ENCODE measurements at regions of chr3 and their contacts with region 1.

Region 1: DNA sequence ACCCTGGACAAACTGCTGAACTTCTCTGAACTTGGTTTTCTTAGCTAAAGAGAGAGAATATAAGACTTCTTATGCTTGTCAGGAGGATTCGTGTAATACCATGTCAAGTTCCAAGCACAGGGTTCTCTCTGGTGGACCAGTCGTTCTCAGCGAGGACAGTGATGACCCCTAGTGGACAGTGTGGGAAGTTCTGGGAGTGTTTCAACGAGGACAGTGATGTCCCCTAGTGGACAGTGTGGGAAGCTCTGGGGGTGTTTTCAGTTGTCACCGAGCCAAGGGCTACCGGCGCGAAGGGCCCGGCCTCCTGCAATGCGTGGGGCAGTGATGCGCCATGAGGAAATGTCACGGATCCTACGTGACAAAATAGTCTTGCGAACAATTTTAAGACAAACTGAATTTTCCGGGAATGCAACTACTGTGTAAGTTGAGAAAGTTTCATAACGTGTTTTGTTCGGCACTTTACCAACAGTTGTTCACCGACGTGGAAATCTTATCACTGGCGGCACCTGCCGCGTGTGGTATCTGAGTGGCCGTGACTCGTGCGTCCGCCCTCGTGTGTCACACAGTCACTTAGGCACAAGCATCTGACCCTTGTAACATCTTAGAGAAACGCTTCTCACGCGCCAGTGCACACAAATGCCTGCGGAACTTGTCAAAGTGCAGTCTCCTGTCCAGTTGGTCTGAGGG is 39.3 kb upstream of the MUC4 start:
- DNase-seq: peak; percentile 76
- H3K4me3 ChIP-seq: no peak overlapping the region
- H3K27ac ChIP-seq: no peak overlapping the region
- H3K4me1 ChIP-seq: peaks cover 6% of the 10 kb centered on the region
- H3K27me3 ChIP-seq: no peaks in the 10 kb centered on the region
- CTCF ChIP-seq: peak; percentile 100

Region 2: DNA sequence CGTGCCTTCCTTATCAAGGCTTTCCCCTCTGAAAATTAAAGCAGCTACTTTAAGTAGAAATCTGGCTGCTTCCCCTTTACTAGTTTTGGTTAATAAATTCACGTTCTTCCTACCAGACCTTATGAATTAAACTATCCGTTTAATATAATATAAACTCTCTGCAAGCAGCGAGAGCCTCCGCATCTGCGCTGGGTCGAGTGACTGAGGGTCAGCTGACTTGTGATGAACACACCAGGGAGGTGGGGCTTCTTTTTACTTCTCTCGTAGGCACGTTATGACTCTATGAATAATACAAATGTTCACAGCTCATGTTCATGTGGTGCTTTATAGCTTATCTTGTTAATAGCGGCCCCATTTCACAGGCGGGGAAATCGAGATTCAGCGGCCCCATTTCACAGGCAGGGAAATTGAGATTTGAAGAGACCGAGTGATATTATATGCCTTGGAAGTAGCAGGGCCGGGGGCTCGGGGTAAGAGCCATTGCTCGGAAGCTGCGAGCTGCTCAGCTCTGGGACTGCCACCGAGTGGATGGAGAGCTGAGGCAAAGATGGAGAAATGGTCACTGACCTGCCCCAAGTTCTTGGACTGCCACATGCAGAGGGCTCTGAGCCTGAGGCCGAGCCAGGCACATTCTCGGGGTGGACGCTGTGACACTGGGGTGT is 47.6 kb before region 1 on chr3:
- CTCF ChIA-PET with region 1: interaction called, 24 read pairs
- dilution Hi-C with region 1: no loop called
- in situ Hi-C with region 1: no loop called
- intact Hi-C with region 1: no loop called
- DNase-seq: no peak
- H3K4me3 ChIP-seq: no peak overlapping the region
- H3K27ac ChIP-seq: no peak overlapping the region
- H3K4me1 ChIP-seq: no peaks in the 10 kb centered on the region
- H3K27me3 ChIP-seq: peaks cover 8% of the 10 kb centered on the region
- CTCF ChIP-seq: no peak

Region 3: DNA sequence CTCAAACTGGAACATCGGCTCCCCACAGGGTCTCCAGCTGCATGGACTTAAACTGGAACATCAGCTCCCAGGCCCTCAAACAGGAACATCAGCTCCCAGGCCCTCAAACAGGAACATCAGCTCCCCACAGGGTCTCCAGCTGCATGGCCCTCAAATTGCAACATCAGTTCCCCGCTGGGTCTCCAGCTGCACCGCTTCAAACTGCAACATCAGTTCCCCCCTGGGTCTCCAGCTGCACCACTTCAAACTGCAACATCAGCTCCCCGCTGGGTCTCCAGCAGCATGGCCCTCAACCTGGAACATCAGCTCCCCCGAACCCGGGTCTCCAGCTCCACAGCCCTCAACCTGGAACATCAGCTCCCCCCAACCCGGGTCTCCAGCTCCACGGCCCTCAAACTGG is 148.9 kb after region 1 on chr3:
- CTCF ChIA-PET with region 1: no interaction called
- dilution Hi-C with region 1: no loop called
- in situ Hi-C with region 1: no loop called
- intact Hi-C with region 1: loop called (anchors 5 kb)
- DNase-seq: no peak
- H3K4me3 ChIP-seq: no peak overlapping the region
- H3K27ac ChIP-seq: no peak overlapping the region
- H3K4me1 ChIP-seq: no peaks in the 10 kb centered on the region
- H3K27me3 ChIP-seq: no peaks in the 10 kb centered on the region
- CTCF ChIP-seq: no peak

Region 4: DNA sequence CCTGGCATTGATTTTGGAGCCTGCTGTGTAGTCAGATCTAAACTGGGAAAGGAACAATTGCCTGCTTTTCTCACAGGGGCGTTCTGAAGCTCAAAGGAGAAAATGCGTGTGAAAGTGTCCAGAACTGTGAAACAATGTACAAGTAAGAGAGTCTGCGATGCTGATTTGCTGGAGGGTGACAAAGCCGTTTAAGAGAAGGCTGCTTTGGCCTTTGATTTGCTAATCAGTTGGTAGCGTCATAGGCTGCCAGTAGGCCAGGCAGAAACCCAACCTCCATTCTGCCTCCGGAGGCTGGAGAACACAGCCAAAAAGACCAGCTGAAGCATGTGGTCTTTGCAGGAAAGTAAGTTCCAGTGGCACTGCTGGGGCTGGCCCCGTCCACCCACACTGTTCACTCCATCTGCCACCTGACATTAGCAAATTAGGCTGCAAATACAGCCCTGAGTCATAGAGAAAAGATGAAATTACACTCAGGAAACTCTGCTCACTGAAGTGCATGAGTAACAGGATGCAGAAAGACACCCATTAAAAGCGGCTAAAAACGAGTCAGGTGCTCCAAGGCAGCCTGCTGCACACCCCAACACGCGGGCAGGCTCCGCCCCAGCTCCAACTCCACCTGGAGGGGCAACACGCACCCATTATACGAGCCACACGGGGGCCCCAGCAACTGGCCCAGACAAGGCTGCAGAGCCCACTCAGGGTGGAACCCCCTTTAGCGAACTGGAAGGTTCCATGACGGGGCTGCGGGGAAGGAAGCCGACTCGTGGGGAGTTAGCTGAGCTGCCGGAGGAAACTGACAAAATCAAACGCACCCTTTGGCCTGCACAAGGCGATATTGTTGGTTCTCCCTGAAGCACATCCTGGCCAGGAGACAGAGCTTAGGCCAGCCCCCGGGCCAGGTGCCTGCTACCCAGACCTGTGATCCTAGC is 328.6 kb after region 1 on chr3:
- CTCF ChIA-PET with region 1: no interaction called
- dilution Hi-C with region 1: no loop called
- in situ Hi-C with region 1: loop called in 1 of 2 experiments (anchors 25 kb)
- intact Hi-C with region 1: no loop called
- DNase-seq: peak; percentile 91
- H3K4me3 ChIP-seq: peak overlapping the region; percentile 11 to 18 (median 17)
- H3K27ac ChIP-seq: peak overlapping the region; percentile 50
- H3K4me1 ChIP-seq: peaks cover 21% of the 10 kb centered on the region
- H3K27me3 ChIP-seq: no peaks in the 10 kb centered on the region
- CTCF ChIP-seq: no peak

Region 5: GRCh38 chr3:196518966-196519717 is 668.1 kb after region 1 on chr3:
- CTCF ChIA-PET with region 1: no interaction called
- dilution Hi-C with region 1: no loop called
- in situ Hi-C with region 1: no loop called
- intact Hi-C with region 1: loop called (anchors 1 kb)
- DNase-seq: peak; percentile 63
- H3K4me3 ChIP-seq: no peak overlapping the region
- H3K27ac ChIP-seq: no peak overlapping the region
- H3K4me1 ChIP-seq: no peaks in the 10 kb centered on the region
- H3K27me3 ChIP-seq: no peaks in the 10 kb centered on the region
- CTCF ChIP-seq: peak; percentile 54 to 66

Region 6: GRCh38 chr3:196537319-196537984 is 686.5 kb after region 1 on chr3:
- CTCF ChIA-PET with region 1: no interaction called
- dilution Hi-C with region 1: no loop called
- in situ Hi-C with region 1: no loop called
- intact Hi-C with region 1: no loop called
- DNase-seq: peak; percentile 37
- H3K4me3 ChIP-seq: no peak overlapping the region
- H3K27ac ChIP-seq: no peak overlapping the region
- H3K4me1 ChIP-seq: no peaks in the 10 kb centered on the region
- H3K27me3 ChIP-seq: no peaks in the 10 kb centered on the region
- CTCF ChIP-seq: peak; percentile 55 to 67